Activated CD8-positive, alpha-beta memory T cell treated with anti-CD3 and anti-CD28 coated beads, Interleukin-2, amount 10 ng/mL, durations not matched to agents 7 days and 5 days (primary cell): ENCODE measurements at regions of chr19 and their contacts with region 1.

Region 1: DNA sequence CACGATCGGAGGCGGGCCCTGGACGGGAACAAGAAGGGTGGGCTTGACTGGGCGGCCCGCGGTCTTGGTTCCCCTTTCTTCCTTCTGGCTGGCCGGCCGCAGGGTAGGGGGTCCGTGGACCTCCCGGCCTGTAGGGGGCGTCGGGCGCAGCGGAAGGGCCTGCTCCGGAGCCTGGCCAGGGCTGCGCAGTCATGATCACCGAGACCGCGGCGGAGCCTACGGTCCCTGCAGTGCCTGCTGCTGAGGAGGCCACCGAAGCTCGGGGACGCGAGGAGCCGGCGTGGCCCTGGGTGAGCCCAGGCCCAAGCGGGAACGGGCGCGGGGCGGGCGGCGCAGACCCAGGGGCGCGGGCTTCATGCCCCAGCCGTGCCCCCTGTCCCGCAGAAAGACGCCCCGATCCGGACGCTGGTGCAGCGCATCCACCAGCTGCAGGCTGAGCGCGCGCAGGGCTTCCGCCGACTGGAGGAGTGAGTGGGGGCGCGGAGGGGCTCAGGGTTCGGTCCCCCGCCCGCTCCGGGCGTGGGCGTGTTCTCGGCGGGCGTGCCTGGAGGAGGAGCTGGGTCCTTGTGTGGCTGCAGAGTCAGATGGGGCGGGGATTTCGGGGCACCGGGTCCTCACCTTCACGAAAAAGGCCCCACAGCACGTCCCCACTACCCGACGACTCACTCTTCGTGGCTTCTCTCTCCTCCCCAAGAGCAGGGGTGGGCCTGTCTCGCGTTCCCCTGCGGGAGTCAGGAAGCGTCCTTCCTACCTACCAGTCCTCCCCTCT is at the start of gene REX1BD:
- DNase-seq: peak; percentile 91
- ATAC-seq: peak; percentile 82
- H3K4me3 Mint-ChIP-seq: peak within 1 kb of the TSS; percentile 77
- H3K27ac Mint-ChIP-seq: peak within 1 kb of the TSS; percentile 94
- H3K4me1 Mint-ChIP-seq: peaks cover 47% of the 10 kb centered on the region
- H3K27me3 Mint-ChIP-seq: no peaks in the 10 kb centered on the region
- total RNA-seq, gene REX1BD: 88.9 to 102 TPM

Region 2: DNA sequence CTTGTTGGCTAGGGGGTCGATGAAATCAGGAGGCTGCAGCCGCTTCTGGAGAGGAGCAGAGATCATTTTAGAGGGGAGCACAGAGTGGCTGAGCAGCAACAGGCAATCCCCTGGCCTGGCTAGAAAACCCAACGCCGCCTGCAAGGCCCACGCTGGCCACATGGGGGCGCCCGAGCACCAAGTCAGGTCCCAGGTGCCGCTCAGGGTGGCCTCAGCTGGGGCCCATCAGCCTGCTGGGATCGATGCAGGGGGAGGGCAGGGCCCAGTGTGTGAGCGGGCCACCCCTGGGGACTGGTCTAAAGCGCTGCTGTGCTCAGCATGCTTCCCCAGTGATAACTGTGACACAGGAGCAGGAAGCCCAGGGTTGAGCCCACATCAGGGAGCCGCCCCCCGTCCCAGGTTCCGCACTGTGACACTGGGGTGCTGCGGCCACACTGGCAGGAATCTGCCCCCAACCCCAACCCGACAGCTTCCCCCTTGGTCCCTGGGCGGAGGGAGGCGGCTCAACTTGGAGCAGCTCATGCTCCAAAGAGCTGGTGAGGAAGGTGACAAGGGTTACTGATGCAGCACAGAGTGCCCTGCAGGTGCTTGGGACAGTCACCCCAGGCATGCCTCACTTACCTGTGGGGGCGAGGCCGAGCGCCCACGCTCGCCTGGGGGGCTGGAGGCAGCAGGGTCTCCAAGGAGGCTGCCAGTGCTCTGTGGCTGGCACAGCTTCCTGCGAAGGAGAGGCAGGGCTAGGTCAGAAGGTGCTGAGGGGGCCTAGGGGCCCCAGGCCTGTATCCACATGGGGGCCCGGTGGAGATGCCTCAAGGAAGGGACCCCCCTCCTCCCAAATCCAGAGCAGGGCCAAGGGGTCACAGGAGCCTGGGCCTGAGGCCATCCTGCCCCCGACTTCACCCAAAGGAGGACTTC is 137.6 kb before region 1 on chr19:
- CTCF ChIA-PET with region 1: interaction called, 15 read pairs
- DNase-seq: peak; percentile 90
- ATAC-seq: peak; percentile 93
- H3K4me3 Mint-ChIP-seq: no peak overlapping the region
- H3K27ac Mint-ChIP-seq: peak overlapping the region; percentile 49
- H3K4me1 Mint-ChIP-seq: peaks cover 2% of the 10 kb centered on the region
- H3K27me3 Mint-ChIP-seq: no peaks in the 10 kb centered on the region

Region 3: GRCh38 chr19:18478569-18479311 is 110.1 kb before region 1 on chr19:
- CTCF ChIA-PET with region 1: interaction called, 24 read pairs
- DNase-seq: peak; percentile 84
- ATAC-seq: peak; percentile 57
- H3K4me3 Mint-ChIP-seq: no peak overlapping the region
- H3K27ac Mint-ChIP-seq: peak overlapping the region; percentile 86
- H3K4me1 Mint-ChIP-seq: peaks cover 91% of the 10 kb centered on the region
- H3K27me3 Mint-ChIP-seq: no peaks in the 10 kb centered on the region

Region 4: GRCh38 chr19:18503971-18504885 is 84.6 kb before region 1 on chr19:
- CTCF ChIA-PET with region 1: interaction called, 10 read pairs
- DNase-seq: no peak
- ATAC-seq: no peak
- H3K4me3 Mint-ChIP-seq: no peak overlapping the region
- H3K27ac Mint-ChIP-seq: peak overlapping the region; percentile 5
- H3K4me1 Mint-ChIP-seq: peaks cover 91% of the 10 kb centered on the region
- H3K27me3 Mint-ChIP-seq: no peaks in the 10 kb centered on the region

Region 5: GRCh38 chr19:18557474-18558201 is 31.2 kb before region 1 on chr19 and contains the start of gene KXD1:
- CTCF ChIA-PET with region 1: interaction called, 22 read pairs
- DNase-seq: peak; percentile 100
- ATAC-seq: peak; percentile 99
- H3K4me3 Mint-ChIP-seq: peak within 1 kb of the TSS; percentile 89
- H3K27ac Mint-ChIP-seq: peak within 1 kb of the TSS; percentile 94
- H3K4me1 Mint-ChIP-seq: peaks cover 24% of the 10 kb centered on the region
- H3K27me3 Mint-ChIP-seq: no peaks in the 10 kb centered on the region
- total RNA-seq, gene KXD1: 106 to 113 TPM

Region 6: DNA sequence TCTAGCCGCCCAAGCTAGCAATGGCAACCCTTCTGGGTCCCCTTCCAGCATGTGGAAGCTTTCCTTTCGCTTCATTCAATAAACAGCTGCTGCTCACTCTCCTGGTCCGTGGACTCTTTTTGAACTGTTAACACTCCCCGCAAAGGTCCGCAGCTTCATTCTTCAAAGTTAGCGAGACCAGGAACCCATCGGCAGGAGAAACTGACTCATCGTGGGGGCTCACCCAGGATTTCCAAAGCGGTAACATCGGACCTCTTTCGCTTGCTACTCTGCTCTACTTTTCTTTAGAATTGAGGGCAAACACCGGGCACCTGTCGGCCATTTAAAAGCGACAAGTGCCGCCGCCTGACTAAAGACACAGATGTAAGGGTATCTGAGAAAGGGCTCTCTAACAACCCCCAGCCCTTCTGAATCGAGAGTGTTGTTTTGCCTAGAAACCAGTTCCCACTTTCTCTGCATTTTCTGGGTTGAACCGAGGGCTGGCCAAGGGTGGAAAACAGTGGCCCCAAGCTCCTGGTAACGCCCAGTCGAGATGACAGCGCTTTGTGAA is 11.4 kb before region 1 on chr19:
- CTCF ChIA-PET with region 1: interaction called, 48 read pairs
- DNase-seq: no peak
- ATAC-seq: no peak
- H3K4me3 Mint-ChIP-seq: no peak overlapping the region
- H3K27ac Mint-ChIP-seq: no peak overlapping the region
- H3K4me1 Mint-ChIP-seq: peaks cover 30% of the 10 kb centered on the region
- H3K27me3 Mint-ChIP-seq: no peaks in the 10 kb centered on the region

Region 7: GRCh38 chr19:18610556-18611326 is 21.9 kb after region 1 on chr19:
- CTCF ChIA-PET with region 1: no interaction called
- DNase-seq: no peak
- ATAC-seq: no peak
- H3K4me3 Mint-ChIP-seq: no peak overlapping the region
- H3K27ac Mint-ChIP-seq: no peak overlapping the region
- H3K4me1 Mint-ChIP-seq: peaks cover 9% of the 10 kb centered on the region
- H3K27me3 Mint-ChIP-seq: peaks cover 74% of the 10 kb centered on the region

Region 8: GRCh38 chr19:18637644-18638630 is 49.1 kb after region 1 on chr19:
- CTCF ChIA-PET with region 1: no interaction called
- DNase-seq: no peak
- ATAC-seq: no peak
- H3K4me3 Mint-ChIP-seq: peak overlapping the region; percentile 83
- H3K27ac Mint-ChIP-seq: peak overlapping the region; percentile 76
- H3K4me1 Mint-ChIP-seq: peaks cover 19% of the 10 kb centered on the region
- H3K27me3 Mint-ChIP-seq: peaks cover 7% of the 10 kb centered on the region

Region 9: DNA sequence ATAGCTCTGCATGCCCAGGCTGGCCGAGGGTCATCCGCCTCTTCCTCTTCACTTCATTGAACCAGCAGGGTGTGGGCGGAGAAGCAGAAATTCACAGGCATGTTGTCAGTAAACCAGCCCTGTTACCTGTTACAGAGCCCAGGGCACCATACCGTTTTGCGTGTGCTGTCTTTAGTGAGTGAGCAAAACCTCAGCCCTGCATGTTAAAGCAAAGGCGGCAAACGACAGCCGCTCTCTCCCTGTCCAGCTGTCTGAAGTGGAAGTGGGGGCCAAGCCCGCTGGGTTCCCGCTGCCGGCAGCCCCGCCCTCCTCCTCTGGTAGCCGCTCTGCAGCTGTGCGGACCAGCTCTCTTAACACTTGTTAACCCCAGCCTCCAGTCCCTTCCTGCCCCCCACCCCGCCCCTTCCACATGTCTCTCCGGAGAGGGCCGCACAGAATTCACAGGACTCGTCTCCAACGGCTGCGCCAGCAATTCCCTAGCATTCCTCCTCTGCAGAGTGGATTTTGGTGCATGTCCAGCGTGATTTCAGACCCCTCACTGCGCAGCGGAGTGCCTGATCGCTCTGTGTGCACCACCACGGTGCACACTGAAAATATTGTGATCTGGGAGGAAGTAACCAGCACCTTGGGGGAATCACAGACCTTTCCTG is 60.7 kb after region 1 on chr19:
- CTCF ChIA-PET with region 1: no interaction called
- DNase-seq: no peak
- ATAC-seq: no peak
- H3K4me3 Mint-ChIP-seq: no peak overlapping the region
- H3K27ac Mint-ChIP-seq: no peak overlapping the region
- H3K4me1 Mint-ChIP-seq: no peaks in the 10 kb centered on the region
- H3K27me3 Mint-ChIP-seq: no peaks in the 10 kb centered on the region